ENCODE measurements at regions of chr2 and their contacts with region 1.

Region 1: DNA sequence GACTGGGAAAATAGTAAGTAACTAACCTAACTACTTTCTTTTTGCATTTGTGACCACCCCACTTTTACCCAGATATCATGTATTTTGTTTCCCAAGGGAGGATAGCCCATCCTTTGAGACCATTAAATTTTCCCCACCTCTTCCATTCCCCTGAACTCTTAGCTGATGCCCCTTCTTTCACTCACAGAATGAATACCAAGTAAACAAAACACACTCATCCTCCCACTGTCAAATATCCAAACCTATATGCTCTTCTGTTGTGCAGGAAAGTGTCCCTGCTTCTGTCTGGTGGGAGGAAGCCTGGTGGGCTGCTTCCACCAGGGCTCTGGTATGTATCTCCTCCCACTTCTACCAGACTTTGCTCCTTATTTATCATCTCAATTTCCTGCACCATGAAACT is 64.6 kb upstream of the PARD3B start:
- DNase-seq: no peak
- ATAC-seq: no peak
- H3K4me3 ChIP-seq: no peak overlapping the region
- H3K4me3 Mint-ChIP-seq: no peak overlapping the region
- H3K27ac ChIP-seq: no peak overlapping the region
- H3K27ac Mint-ChIP-seq: no peak overlapping the region
- H3K4me1 ChIP-seq: no peaks in the 10 kb centered on the region
- H3K4me1 Mint-ChIP-seq: no peaks in the 10 kb centered on the region
- H3K27me3 ChIP-seq: no peaks in the 10 kb centered on the region
- H3K27me3 Mint-ChIP-seq: no peaks in the 10 kb centered on the region
- CTCF ChIP-seq: no peak

Region 2: GRCh38 chr2:203820969-203821368 is 659.7 kb before region 1 on chr2:
- CTCF ChIA-PET with region 1: no interaction called
- POLR2A ChIA-PET with region 1: no interaction called
- intact Hi-C with region 1: no loop called
- DNase-seq: no peak
- ATAC-seq: no peak
- H3K4me3 ChIP-seq: no peak overlapping the region
- H3K4me3 Mint-ChIP-seq: no peak overlapping the region
- H3K27ac ChIP-seq: no peak overlapping the region
- H3K27ac Mint-ChIP-seq: no peak overlapping the region
- H3K4me1 ChIP-seq: no peaks in the 10 kb centered on the region
- H3K4me1 Mint-ChIP-seq: no peaks in the 10 kb centered on the region
- H3K27me3 ChIP-seq: no peaks in the 10 kb centered on the region
- H3K27me3 Mint-ChIP-seq: no peaks in the 10 kb centered on the region
- CTCF ChIP-seq: no peak

Region 3: GRCh38 chr2:203871371-203871983 is 609.2 kb before region 1 on chr2:
- CTCF ChIA-PET with region 1: no interaction called
- POLR2A ChIA-PET with region 1: no interaction called
- intact Hi-C with region 1: no loop called
- DNase-seq: peak in 4 of 14 experiments; percentile 28 to 62 (median 48)
- ATAC-seq: no peak
- H3K4me3 ChIP-seq: peak overlapping the region; percentile 58
- H3K4me3 Mint-ChIP-seq: peak overlapping the region; percentile 89
- H3K27ac ChIP-seq: peak overlapping the region; percentile 6 to 62
- H3K27ac Mint-ChIP-seq: peak overlapping the region; percentile 93
- H3K4me1 ChIP-seq: peaks cover 57% of the 10 kb centered on the region
- H3K4me1 Mint-ChIP-seq: peaks cover 97% of the 10 kb centered on the region
- H3K27me3 ChIP-seq: no peaks in the 10 kb centered on the region
- H3K27me3 Mint-ChIP-seq: no peaks in the 10 kb centered on the region
- CTCF ChIP-seq: no peak

Region 4: DNA sequence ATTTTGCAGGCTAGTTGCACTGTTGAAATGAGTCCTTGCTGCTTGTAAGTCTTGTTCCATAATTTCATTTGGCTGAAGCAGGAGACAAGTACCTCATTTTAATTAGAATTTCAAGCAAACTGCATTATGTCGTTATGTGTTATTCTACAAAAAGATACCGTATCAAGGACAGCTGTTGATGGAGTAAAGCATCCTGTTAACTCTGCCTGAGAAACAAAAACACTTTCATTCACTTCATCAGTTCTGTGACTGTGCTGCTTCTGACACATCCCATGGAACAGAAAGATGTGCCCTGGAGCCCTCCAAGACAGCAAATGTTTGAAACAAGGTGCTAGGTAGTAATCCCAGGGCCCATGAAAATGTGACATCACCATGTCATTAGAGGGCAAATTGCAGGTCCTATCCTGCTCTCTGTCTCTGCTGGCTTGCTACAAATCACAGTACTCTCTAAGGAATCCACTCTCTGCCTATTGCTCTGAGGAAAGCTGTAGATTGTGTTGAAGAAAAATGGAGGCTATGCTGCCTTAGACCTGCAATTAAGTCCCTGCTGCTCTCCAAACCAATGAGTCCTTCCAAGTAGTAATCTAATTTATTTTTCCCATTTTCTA is 145.1 kb before region 1 on chr2:
- CTCF ChIA-PET with region 1: no interaction called
- POLR2A ChIA-PET with region 1: no interaction called
- intact Hi-C with region 1: no loop called
- DNase-seq: no peak
- ATAC-seq: no peak
- H3K4me3 ChIP-seq: no peak overlapping the region
- H3K4me3 Mint-ChIP-seq: no peak overlapping the region
- H3K27ac ChIP-seq: no peak overlapping the region
- H3K27ac Mint-ChIP-seq: no peak overlapping the region
- H3K4me1 ChIP-seq: no peaks in the 10 kb centered on the region
- H3K4me1 Mint-ChIP-seq: no peaks in the 10 kb centered on the region
- H3K27me3 ChIP-seq: peaks cover 11 to 13% of the 10 kb centered on the region in 2 experiments
- H3K27me3 Mint-ChIP-seq: peaks cover 56% of the 10 kb centered on the region
- CTCF ChIP-seq: no peak

Region 5: GRCh38 chr2:204495381-204495780 is 14.7 kb after region 1 on chr2:
- CTCF ChIA-PET with region 1: no interaction called
- POLR2A ChIA-PET with region 1: no interaction called
- intact Hi-C with region 1: loop called in 1 of 2 experiments (anchors 2 kb)
- DNase-seq: no peak
- ATAC-seq: no peak
- H3K4me3 ChIP-seq: no peak overlapping the region
- H3K4me3 Mint-ChIP-seq: no peak overlapping the region
- H3K27ac ChIP-seq: no peak overlapping the region
- H3K27ac Mint-ChIP-seq: no peak overlapping the region
- H3K4me1 ChIP-seq: no peaks in the 10 kb centered on the region
- H3K4me1 Mint-ChIP-seq: no peaks in the 10 kb centered on the region
- H3K27me3 ChIP-seq: peaks cover 0 to 3% of the 10 kb centered on the region in 2 experiments
- H3K27me3 Mint-ChIP-seq: peaks cover 5% of the 10 kb centered on the region
- CTCF ChIP-seq: no peak